ENCODE measurements at regions of chr18 and their contacts with region 1.

Region 1: GRCh38 chr18:63320046-63320689 is 599 bp upstream of the BCL2 start:
- DNase-seq: peak; percentile 76 to 96 (median 84)
- ATAC-seq: peak; percentile 80
- H3K4me3 ChIP-seq: peak overlapping the region; percentile 94
- H3K4me3 Mint-ChIP-seq: peak overlapping the region; percentile 92
- H3K27ac ChIP-seq: peak overlapping the region in 1 of 2 donors; percentile 46
- H3K27ac Mint-ChIP-seq: peak overlapping the region; percentile 95
- H3K4me1 ChIP-seq: peaks cover 17% of the 10 kb centered on the region
- H3K4me1 Mint-ChIP-seq: peaks cover 56% of the 10 kb centered on the region
- H3K27me3 ChIP-seq: no peaks in the 10 kb centered on the region
- H3K27me3 Mint-ChIP-seq: no peaks in the 10 kb centered on the region
- CTCF ChIP-seq: no peak

Region 2: DNA sequence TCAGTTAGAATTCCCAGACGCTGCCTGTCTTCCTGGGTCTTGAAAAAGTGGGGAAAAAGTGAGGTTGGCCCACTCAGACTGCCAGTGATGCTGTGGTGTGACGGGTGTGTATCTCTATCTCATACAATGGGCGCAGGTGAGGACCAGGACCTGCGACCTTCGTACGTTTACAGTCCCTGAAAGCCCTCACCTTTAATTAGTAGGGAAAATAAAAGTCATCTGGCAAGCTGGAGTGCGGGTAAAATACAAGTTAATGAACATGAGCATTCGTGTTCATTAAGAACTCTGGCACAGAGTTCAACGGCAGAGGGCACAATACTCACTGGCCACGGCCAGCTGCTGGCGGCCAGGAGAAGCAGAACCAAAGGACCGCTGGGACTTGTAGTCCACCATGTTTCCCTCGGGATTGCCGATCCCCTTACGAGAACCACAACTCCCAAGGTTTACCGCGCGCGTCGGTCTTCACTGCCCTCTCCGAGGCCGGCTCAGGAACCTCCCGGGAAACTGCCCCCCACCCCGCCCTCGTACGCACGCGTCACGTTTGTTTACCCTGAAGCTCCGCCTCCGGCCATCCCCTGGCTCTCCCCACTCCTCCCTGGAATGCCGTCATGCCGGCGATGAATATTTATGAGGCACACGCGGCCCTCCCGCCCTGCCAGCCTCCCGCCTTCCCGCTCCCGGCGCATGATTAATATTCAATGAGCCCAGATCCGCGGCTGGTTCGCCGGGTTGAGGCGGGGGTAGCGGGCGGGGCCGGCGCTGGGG is 605.3 kb before region 1 on chr18:
- CTCF ChIA-PET with region 1: no interaction called
- POLR2A ChIA-PET with region 1: interaction called, 3 read pairs
- intact Hi-C with region 1: loop called (anchors 10 kb)
- DNase-seq: peak; percentile 82 to 98 (median 90)
- ATAC-seq: peak; percentile 71
- H3K4me3 ChIP-seq: peak overlapping the region; percentile 63
- H3K4me3 Mint-ChIP-seq: peak overlapping the region; percentile 94
- H3K27ac ChIP-seq: peak overlapping the region; percentile 71 to 84
- H3K27ac Mint-ChIP-seq: peak overlapping the region; percentile 98
- H3K4me1 ChIP-seq: peaks cover 15% of the 10 kb centered on the region
- H3K4me1 Mint-ChIP-seq: peaks cover 30% of the 10 kb centered on the region
- H3K27me3 ChIP-seq: no peaks in the 10 kb centered on the region
- H3K27me3 Mint-ChIP-seq: no peaks in the 10 kb centered on the region
- CTCF ChIP-seq: peak; percentile 73

Region 3: GRCh38 chr18:63144748-63145147 is 175.4 kb before region 1 on chr18:
- CTCF ChIA-PET with region 1: interaction called, 56 read pairs
- POLR2A ChIA-PET with region 1: interaction called, 4 read pairs
- intact Hi-C with region 1: no loop called
- DNase-seq: no peak
- ATAC-seq: no peak
- H3K4me3 ChIP-seq: no peak overlapping the region
- H3K4me3 Mint-ChIP-seq: no peak overlapping the region
- H3K27ac ChIP-seq: no peak overlapping the region
- H3K27ac Mint-ChIP-seq: no peak overlapping the region
- H3K4me1 ChIP-seq: peaks cover 23% of the 10 kb centered on the region
- H3K4me1 Mint-ChIP-seq: peaks cover 39% of the 10 kb centered on the region
- H3K27me3 ChIP-seq: no peaks in the 10 kb centered on the region
- H3K27me3 Mint-ChIP-seq: no peaks in the 10 kb centered on the region
- CTCF ChIP-seq: no peak

Region 4: DNA sequence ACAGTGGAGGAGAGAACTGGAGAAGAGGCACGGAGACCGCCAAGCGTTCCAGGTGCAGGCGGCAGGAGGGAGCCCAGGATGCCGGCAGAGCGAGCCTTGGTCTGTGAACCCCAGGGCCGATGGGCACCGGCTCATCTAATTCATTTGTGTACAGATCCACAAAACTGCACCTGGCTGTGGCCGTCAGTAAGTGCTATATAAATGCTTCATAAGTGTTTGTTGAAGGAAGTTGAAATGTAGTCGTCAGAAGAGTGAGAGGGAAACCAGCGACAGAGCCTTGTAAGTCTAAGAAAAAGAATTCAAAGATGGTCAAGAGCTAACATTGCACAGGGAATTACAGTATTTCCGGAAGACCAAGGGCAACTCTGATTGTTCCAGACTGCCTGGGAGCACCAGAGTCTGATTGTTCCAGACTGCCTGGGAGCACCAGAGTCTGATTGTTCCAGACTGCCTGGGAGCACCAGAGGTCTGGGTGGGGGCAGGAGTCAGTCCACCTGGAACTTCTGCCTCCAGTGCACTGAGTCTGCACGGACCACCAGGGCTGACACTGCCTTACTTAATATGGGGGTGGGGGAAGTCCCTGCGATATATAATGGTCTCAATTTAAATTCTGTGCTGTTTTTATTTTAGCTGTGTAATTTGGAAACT is 112.9 kb before region 1 on chr18:
- CTCF ChIA-PET with region 1: interaction called, 11 read pairs
- POLR2A ChIA-PET with region 1: interaction called, 11 read pairs
- intact Hi-C with region 1: loop called in 1 of 2 experiments (anchors 5 kb)
- DNase-seq: peak in 1 of 14 experiments; percentile 28
- ATAC-seq: peak; percentile 63
- H3K4me3 ChIP-seq: peak overlapping the region; percentile 31
- H3K4me3 Mint-ChIP-seq: peak overlapping the region; percentile 68
- H3K27ac ChIP-seq: peak overlapping the region; percentile 47 to 51
- H3K27ac Mint-ChIP-seq: peak overlapping the region; percentile 99
- H3K4me1 ChIP-seq: peaks cover 80% of the 10 kb centered on the region
- H3K4me1 Mint-ChIP-seq: peaks cover 94% of the 10 kb centered on the region
- H3K27me3 ChIP-seq: no peaks in the 10 kb centered on the region
- H3K27me3 Mint-ChIP-seq: no peaks in the 10 kb centered on the region
- CTCF ChIP-seq: no peak

Region 5: DNA sequence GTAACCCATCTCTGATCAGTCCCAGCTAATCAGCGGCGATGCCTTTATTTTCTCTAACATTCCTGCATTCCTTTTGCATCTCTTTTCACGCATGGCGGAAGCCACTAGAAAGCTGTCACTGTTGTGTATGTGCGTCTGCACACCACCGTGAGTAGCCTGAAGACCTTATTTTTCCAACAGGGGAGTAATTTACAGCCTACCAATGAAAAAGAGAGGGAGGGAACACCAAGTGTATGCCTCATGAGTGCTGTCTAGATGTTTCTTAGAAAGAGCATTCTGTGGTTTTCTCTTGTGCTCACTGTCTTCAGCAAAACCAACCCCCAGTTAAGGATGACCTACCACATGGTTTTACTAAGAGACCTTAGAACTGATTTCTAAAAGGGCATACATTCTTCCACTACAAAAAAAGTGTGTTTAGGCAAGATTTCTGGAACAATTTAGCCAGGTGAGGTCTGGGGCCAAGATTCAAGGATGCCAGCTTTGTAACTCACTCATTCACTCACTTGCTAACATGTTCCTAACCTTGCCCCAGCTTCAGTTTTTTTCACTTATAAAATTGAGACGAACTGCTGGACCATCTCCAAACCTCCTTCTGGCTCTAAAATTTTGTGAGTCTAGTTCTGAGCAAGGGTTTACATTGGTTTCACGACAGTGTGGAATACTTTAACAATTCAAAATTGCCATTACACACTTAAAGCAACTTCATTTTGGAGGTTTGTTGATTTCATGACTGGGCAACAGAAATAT is 52.0 kb before region 1 on chr18:
- CTCF ChIA-PET with region 1: interaction called, 12 read pairs
- POLR2A ChIA-PET with region 1: interaction called, 6 read pairs
- intact Hi-C with region 1: loop called in 1 of 2 experiments (anchors 10 kb)
- DNase-seq: peak in 1 of 14 experiments; percentile 51
- ATAC-seq: peak; percentile 54
- H3K4me3 ChIP-seq: no peak overlapping the region
- H3K4me3 Mint-ChIP-seq: peak overlapping the region; percentile 26
- H3K27ac ChIP-seq: no peak overlapping the region
- H3K27ac Mint-ChIP-seq: peak overlapping the region; percentile 19
- H3K4me1 ChIP-seq: peaks cover 31% of the 10 kb centered on the region
- H3K4me1 Mint-ChIP-seq: peaks cover 63% of the 10 kb centered on the region
- H3K27me3 ChIP-seq: no peaks in the 10 kb centered on the region
- H3K27me3 Mint-ChIP-seq: no peaks in the 10 kb centered on the region
- CTCF ChIP-seq: no peak

Region 6: DNA sequence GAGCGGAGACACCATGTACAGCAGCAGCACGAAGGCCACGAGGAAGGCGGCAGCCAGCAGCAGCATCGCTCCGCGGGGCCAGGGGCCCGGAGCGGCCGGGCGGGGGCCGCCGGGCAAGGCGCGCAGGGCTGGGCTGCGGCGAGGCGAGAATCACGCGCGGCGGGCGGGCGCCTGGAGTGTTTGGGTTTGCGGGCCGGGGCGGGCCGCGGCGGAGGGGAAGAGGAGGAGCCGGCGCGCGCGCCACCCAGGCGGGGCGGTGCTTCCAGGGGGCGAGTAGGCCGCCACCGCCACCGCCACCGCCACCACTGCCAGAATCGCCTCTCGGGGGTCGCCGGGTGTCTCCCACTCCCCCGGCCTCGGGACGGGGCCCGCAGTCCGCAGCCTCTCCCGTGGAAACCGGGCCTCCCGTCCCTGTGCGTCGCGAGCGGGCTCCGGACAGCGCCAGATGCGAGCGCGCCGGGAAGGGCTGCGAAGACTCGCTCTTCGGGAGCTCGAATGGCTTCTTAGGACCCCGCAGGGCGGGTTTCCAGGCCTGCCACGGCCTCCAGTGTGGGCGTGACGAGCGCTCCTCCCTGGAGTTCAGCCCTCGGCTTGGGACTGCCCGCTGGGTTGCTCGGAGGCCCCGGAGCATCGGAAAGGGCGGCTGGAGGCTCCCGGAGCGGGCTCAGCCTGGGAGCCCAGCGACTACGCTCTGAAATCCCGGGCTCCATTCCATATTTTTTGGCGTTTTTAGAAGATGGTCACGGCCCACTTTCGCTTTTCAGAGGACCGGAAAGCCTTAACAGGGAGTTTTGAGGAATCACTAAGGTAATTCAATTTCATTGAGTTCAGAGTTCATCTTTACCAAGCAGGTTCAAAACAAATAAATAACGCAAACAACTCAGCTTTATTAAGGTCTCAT is 47.1 kb after region 1 on chr18 and contains the start of gene KDSR:
- CTCF ChIA-PET with region 1: interaction called, 3 read pairs
- POLR2A ChIA-PET with region 1: interaction called, 5 read pairs
- intact Hi-C with region 1: loop called in 1 of 2 experiments (anchors 2 kb)
- DNase-seq: peak; percentile 63 to 91 (median 77)
- ATAC-seq: peak; percentile 80
- H3K4me3 ChIP-seq: peak within 1 kb of the TSS; percentile 94
- H3K4me3 Mint-ChIP-seq: peak within 1 kb of the TSS; percentile 94
- H3K27ac ChIP-seq: peak within 1 kb of the TSS; percentile 65 to 72
- H3K27ac Mint-ChIP-seq: peak within 1 kb of the TSS; percentile 91
- H3K4me1 ChIP-seq: peaks cover 33% of the 10 kb centered on the region
- H3K4me1 Mint-ChIP-seq: peaks cover 56% of the 10 kb centered on the region
- H3K27me3 ChIP-seq: no peaks in the 10 kb centered on the region
- H3K27me3 Mint-ChIP-seq: no peaks in the 10 kb centered on the region
- CTCF ChIP-seq: no peak
- total RNA-seq, gene KDSR: 21.1 to 23.5 TPM